Breast epithelium (tissue), 4 donors: ENCODE measurements at regions of chr18 and their contacts with region 1.

Region 1: GRCh38 chr18:61612517-61612916 is 279.3 kb downstream of the CDH20 start:
- DNase-seq: no peak
- H3K4me3 ChIP-seq: no peak overlapping the region
- H3K27ac ChIP-seq: no peak overlapping the region
- H3K4me1 ChIP-seq: no peaks in the 10 kb centered on the region
- H3K27me3 ChIP-seq: no peaks in the 10 kb centered on the region
- CTCF ChIP-seq: no peak
- POLR2A ChIP-seq: no peak

Region 2: GRCh38 chr18:62442391-62442790 is 829.9 kb after region 1 on chr18:
- intact Hi-C with region 1: loop called (anchors 5 kb)
- DNase-seq: no peak
- H3K4me3 ChIP-seq: no peak overlapping the region
- H3K27ac ChIP-seq: no peak overlapping the region
- H3K4me1 ChIP-seq: no peaks in the 10 kb centered on the region
- H3K27me3 ChIP-seq: no peaks in the 10 kb centered on the region
- CTCF ChIP-seq: no peak
- POLR2A ChIP-seq: no peak